Left colon (tissue), 2 donors: ENCODE measurements at regions of chr12 and their contacts with region 1.

Region 1: DNA sequence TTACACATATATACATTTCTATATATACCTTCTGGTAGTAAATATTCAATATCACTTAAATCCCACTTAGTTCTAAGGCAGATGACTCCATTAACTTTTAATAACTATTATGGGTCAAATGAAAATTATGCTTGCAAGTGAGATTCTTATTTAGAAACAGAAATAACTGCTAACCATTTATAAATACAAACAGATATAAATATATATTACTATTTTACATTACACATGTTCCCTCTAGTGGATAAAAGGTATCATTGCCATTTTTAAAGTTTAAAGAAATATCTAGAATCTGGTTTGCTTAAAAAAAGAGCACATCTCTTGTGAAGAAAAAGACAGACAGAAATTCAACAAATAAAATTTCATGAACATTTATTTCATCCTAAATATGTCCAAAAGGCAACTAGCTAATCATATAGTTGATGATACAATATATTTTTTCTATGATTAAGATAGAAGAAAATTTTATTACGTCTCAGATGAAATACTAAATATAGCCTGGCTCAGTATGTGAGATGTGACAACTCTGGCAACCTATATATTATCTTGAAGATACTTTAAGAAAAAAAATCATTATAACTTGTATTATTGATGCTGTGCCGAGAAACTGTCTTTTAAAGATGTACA is 11.7 kb upstream of the RAD51AP1 start:
- DNase-seq: no peak
- ATAC-seq: no peak

Region 2: DNA sequence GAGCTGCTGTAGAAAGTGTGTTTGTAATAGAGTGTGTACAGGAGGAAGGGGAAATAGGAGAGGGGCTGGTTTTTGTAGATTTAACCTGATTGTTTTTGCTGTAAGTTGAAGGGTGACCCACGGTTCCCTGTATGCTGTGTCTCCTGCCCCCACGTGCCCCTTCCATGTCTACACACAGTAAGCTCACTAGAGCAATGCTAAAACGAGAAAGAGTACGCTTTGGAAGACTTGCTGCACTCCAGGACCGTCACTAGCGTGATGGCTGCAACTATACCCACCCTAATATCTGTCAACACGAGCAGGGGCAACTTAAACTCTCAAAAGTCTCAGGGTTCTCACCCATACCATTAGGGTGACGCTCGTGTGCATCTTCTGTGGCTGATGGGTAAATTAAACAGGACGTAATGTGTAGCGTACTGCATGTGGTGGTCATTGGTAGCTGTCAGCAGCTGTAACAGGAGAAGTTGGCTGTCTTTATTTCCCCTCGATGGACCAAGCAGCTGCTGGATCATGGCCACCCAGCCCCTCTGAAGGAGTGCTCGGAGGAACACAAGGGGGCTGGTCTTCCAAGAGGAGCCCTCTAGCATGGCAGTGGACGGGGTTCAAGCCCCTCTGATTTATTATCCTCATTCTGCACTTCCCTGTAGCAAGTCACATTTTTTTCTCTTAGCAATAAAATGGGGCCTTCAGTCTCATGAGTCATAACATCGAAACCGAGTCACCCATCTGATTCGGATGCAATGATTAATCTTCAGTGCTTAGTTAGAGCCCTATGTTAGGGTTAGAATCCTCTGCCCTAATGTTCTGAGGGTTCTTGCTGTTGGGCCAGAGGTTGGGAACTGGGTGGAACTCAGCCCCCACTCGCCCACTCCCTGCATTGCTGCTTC is 239.5 kb before region 1 on chr12:
- intact Hi-C with region 1: no loop called
- DNase-seq: no peak
- ATAC-seq: peak; percentile 49

Region 3: GRCh38 chr12:4307593-4308333 is 219.3 kb before region 1 on chr12:
- intact Hi-C with region 1: loop called in 1 of 2 experiments (anchors 5 kb)
- DNase-seq: peak; percentile 82 to 89
- ATAC-seq: peak; percentile 91

Region 4: DNA sequence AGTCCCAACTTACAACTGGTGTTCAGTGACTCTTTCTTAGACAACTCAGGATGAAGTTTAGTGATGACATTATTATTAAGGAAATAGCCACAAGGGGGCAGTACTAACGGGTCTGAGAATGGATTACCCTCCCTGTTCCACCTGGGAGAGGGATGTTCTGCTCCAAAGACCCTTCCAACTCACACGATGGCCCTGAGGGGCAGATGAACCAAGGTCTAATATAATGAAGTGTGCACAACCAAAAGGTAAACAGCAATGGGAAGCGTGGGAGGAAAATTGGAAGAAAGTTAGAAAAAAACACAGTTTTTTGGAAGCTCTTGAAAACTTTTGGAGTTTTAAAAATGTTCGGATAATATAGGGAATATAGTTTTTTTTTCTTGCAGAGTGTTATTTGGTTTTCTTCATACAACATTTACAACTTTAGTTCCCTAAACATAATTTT is 105.4 kb before region 1 on chr12:
- intact Hi-C with region 1: loop called in 1 of 2 experiments (anchors 5 kb)
- DNase-seq: no peak
- ATAC-seq: peak; percentile 37